Activated naive CD4-positive, alpha-beta T cell treated with anti-CD3 and anti-CD28 coated beads for 36 hours (primary cell): ENCODE measurements at regions of chr10 and their contacts with region 1.

Region 1: GRCh38 chr10:3668276-3668965 is 116.6 kb downstream of the KLF6 start:
- DNase-seq: peak; percentile 75
- H3K4me3 Mint-ChIP-seq: peak overlapping the region; percentile 74
- H3K27ac Mint-ChIP-seq: peak overlapping the region; percentile 84
- H3K4me1 Mint-ChIP-seq: peaks cover 37% of the 10 kb centered on the region
- H3K27me3 Mint-ChIP-seq: no peaks in the 10 kb centered on the region

Region 2: GRCh38 chr10:2173327-2173726 is 1495.1 kb before region 1 on chr10:
- CTCF ChIA-PET with region 1: no interaction called
- intact Hi-C with region 1: no loop called
- DNase-seq: no peak
- H3K4me3 Mint-ChIP-seq: no peak overlapping the region
- H3K27ac Mint-ChIP-seq: no peak overlapping the region
- H3K4me1 Mint-ChIP-seq: no peaks in the 10 kb centered on the region
- H3K27me3 Mint-ChIP-seq: peaks cover 10% of the 10 kb centered on the region

Region 3: GRCh38 chr10:3623746-3624145 is 44.7 kb before region 1 on chr10:
- CTCF ChIA-PET with region 1: no interaction called
- intact Hi-C with region 1: loop called (anchors 2 kb)
- DNase-seq: no peak
- H3K4me3 Mint-ChIP-seq: no peak overlapping the region
- H3K27ac Mint-ChIP-seq: no peak overlapping the region
- H3K4me1 Mint-ChIP-seq: peaks cover 21% of the 10 kb centered on the region
- H3K27me3 Mint-ChIP-seq: peaks cover 2% of the 10 kb centered on the region

Region 4: GRCh38 chr10:3689871-3690510 is 21.6 kb after region 1 on chr10:
- CTCF ChIA-PET with region 1: no interaction called
- intact Hi-C with region 1: loop called (anchors 2 kb)
- DNase-seq: peak; percentile 43
- H3K4me3 Mint-ChIP-seq: no peak overlapping the region
- H3K27ac Mint-ChIP-seq: peak overlapping the region; percentile 56
- H3K4me1 Mint-ChIP-seq: peaks cover 19% of the 10 kb centered on the region
- H3K27me3 Mint-ChIP-seq: no peaks in the 10 kb centered on the region

Region 5: DNA sequence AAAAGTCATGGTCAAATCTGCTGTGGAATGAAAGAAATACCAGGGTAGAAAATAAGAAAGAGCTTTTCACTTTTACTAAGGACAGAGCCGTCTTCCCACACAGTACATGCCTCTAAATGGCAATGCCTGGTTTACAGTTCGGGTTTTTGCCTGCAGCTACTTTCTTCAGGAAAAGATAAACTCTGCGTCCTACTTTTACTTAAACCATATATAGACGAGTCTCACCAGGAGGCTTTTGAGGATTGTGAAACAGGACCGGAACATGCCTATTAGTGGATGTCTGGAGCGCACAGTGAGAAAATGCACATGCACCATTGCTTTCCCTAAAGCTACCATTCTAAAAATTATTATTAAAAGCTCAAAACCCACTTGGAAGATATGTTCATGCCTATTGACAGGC is 46.1 kb after region 1 on chr10:
- CTCF ChIA-PET with region 1: no interaction called
- intact Hi-C with region 1: no loop called
- DNase-seq: no peak
- H3K4me3 Mint-ChIP-seq: no peak overlapping the region
- H3K27ac Mint-ChIP-seq: no peak overlapping the region
- H3K4me1 Mint-ChIP-seq: no peaks in the 10 kb centered on the region
- H3K27me3 Mint-ChIP-seq: no peaks in the 10 kb centered on the region

Region 6: DNA sequence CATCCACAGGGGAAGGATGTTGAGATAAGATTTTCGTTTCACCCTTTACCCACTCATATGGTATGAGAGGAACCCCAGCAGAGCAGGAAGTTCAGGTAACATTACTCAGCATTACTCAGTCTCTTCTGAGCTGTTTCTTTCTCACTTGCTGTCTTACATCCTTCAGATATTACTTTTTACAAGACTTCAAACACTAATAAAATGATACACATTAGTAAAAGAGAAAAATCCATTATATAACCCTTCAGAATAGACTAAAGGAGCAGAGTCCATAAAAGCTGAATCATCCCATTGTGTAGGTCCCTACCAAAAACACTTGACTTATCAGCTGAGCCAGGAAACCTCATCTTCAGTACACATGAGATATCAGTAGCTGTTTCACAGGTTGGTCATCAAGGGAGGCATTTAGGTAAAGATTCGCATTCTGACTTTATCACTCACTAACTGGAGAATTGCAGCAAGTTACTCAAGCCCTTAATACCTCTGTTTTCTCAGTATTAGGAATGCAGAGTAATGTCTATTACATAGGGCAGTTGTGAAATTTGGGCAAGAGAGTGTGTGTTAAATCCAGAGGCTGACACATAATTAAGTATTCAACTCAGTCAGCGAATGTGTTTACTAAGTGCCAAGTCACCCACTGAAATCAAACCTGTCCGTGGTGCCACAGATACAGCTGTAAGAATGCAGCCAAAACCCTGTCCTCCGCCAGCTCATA is 71.9 kb after region 1 on chr10:
- CTCF ChIA-PET with region 1: no interaction called
- intact Hi-C with region 1: loop called (anchors 2 kb)
- DNase-seq: no peak
- H3K4me3 Mint-ChIP-seq: no peak overlapping the region
- H3K27ac Mint-ChIP-seq: peak overlapping the region; percentile 59
- H3K4me1 Mint-ChIP-seq: peaks cover 31% of the 10 kb centered on the region
- H3K27me3 Mint-ChIP-seq: no peaks in the 10 kb centered on the region